Activated CD8-positive, alpha-beta memory T cell treated with anti-CD3 and anti-CD28 coated beads, Interleukin-2, amount 10 ng/mL, durations not matched to agents 7 days and 5 days (primary cell): ENCODE measurements at regions of chr7 and their contacts with region 1.

Region 1: DNA sequence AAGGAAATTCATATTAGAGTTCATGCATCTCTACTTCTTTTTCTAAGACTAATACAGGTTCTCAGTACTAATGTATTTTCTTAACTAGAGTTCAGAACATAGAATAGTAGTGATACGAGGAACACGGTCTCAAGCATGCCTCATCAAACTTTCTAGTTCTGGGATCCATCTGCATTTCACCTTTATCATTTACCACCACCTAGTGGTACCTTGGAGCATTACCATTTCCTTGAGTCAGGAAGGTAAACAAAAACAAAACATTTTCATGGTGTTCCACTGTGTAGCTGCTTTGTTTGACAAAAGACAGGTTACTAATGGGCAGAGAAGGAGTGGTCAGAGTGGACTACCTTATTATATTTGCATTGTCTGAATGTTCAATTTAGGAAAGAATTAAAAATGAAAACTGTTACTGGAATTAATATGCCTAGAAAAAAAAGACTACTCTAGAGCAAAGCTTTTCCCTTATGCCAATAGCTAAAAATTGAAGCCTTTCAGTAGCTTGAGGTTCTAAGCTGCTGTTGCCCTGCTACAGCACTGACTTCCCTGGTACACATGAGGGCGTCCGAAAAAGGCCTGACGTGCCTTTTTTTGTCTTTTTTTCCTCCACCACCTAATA is 44.5 kb downstream of the STARD3NL start:
- DNase-seq: no peak
- ATAC-seq: peak; percentile 32
- H3K4me3 Mint-ChIP-seq: no peak overlapping the region
- H3K27ac Mint-ChIP-seq: peak overlapping the region; percentile 74
- H3K4me1 Mint-ChIP-seq: peaks cover 80% of the 10 kb centered on the region
- H3K27me3 Mint-ChIP-seq: no peaks in the 10 kb centered on the region

Region 2: DNA sequence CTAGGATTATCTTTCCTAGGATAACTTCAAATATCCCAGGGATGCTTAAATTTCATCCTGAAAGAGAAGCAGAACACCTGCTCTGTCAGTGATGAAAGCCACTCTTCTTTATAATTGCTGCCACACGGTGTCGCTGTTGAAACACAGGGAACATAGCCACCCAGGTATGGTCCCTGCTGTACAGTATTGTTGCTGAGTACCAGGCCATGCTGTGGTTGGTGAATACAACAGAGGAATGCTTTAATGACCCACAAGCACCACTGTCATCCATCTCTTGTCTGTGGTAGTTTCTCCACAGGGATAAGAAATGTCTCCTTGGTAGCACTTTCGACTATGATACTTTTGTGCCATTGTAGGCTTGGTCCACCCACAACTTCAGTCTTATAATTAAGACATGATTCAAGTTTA is 115.1 kb before region 1 on chr7:
- CTCF ChIA-PET with region 1: interaction called, 60 read pairs
- DNase-seq: peak; percentile 79
- ATAC-seq: peak; percentile 91
- H3K4me3 Mint-ChIP-seq: no peak overlapping the region
- H3K27ac Mint-ChIP-seq: no peak overlapping the region
- H3K4me1 Mint-ChIP-seq: peaks cover 2% of the 10 kb centered on the region
- H3K27me3 Mint-ChIP-seq: peaks cover 36% of the 10 kb centered on the region

Region 3: GRCh38 chr7:38206071-38206470 is 16.5 kb before region 1 on chr7:
- CTCF ChIA-PET with region 1: no interaction called
- DNase-seq: no peak
- ATAC-seq: no peak
- H3K4me3 Mint-ChIP-seq: no peak overlapping the region
- H3K27ac Mint-ChIP-seq: no peak overlapping the region
- H3K4me1 Mint-ChIP-seq: peaks cover 1% of the 10 kb centered on the region
- H3K27me3 Mint-ChIP-seq: no peaks in the 10 kb centered on the region

Region 4: DNA sequence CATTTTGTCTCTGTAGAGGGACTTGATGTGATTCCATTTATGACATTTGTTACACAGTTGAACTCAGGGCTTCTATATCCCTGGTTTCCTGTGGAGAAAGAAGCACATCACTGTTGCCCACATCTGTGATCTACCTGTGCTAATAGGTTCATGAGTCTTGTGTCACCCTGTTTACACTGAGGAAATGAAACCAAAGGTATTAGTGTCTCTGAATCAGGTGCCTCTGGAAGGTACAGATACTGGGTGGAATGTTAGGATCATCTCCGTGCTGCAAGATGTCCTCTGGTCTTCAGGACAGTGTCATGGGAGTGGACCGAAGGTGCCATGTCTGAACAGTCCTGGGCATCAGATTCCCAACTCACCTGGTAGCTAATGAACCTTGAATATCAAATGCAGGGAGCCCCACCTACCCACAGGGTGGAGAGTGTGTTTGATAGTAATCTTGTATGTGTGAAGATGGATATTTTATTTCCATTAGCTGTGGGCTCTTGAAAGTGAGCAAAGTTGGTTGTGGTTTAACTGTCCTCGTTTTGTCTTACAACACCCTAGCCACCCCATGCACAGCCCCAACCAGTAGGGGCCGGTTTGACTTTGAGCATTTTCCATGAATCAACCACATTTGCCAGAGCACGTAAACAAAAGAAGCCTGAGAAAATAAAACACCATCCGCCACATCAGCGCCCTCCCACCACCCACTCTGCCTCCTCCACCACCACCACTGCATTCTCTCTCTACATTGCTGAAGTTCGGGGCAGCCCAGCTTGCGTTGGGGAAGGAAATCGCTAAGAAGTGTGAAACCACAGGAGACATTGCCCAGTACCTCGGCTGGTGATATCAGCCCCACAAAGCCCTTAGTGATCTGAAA is 10.1 kb after region 1 on chr7:
- CTCF ChIA-PET with region 1: interaction called, 104 read pairs
- DNase-seq: peak; percentile 95
- ATAC-seq: peak; percentile 80
- H3K4me3 Mint-ChIP-seq: peak overlapping the region; percentile 55
- H3K27ac Mint-ChIP-seq: peak overlapping the region; percentile 96
- H3K4me1 Mint-ChIP-seq: peaks cover 91% of the 10 kb centered on the region
- H3K27me3 Mint-ChIP-seq: no peaks in the 10 kb centered on the region

Region 5: DNA sequence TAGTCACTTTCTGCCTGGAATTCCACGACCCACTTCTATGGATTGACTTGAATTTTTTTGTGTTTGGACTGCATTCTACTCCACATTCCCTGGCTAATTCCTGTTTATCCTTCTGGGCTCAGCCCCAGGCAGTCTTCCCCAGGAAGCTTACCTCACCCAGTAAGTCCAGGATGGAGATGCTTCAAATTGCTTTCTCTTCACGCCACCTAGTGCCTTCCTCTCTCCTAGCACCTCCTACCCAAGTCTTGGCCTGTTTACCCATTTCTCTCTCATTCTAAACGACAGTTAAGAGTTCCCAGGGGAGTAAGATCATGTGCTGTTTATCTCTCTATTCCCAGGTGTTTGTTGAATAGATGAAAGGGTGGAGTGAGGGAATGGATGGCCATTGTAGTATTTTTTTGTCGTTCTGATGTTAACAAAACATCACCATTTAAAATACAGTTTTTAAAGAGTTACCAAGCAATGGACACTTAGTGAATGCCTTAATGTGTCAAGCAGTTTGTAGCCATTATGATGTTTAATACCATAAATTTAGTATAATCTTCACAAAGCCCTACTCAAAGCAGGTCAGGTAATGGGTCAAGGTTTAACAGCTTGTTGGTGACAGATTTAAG is 96.3 kb after region 1 on chr7:
- CTCF ChIA-PET with region 1: interaction called, 55 read pairs
- DNase-seq: peak; percentile 58
- ATAC-seq: peak; percentile 52
- H3K4me3 Mint-ChIP-seq: peak overlapping the region; percentile 77
- H3K27ac Mint-ChIP-seq: peak overlapping the region; percentile 97
- H3K4me1 Mint-ChIP-seq: peaks cover 42% of the 10 kb centered on the region
- H3K27me3 Mint-ChIP-seq: no peaks in the 10 kb centered on the region

Region 6: DNA sequence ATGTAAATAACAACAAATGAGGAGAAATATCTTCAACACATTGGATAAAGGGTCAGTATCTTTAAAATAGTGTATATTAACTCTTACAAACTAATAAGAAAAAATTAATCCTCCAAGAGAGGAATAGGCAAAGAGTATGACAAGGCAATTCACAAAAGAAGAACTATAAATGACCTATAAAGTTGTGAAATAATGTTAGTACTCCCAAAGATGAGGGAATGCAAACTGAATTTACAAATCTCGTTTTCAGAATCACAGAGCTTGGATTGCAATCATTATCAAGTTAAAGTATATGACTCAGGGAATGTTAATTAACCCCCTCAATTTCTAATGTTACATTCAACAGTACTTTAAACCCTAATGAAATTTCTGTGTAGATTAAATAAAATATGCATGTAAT is 138.2 kb after region 1 on chr7:
- CTCF ChIA-PET with region 1: interaction called, 314 read pairs
- DNase-seq: no peak
- ATAC-seq: no peak
- H3K4me3 Mint-ChIP-seq: peak overlapping the region; percentile 99
- H3K27ac Mint-ChIP-seq: peak overlapping the region; percentile 95
- H3K4me1 Mint-ChIP-seq: peaks cover 26% of the 10 kb centered on the region
- H3K27me3 Mint-ChIP-seq: no peaks in the 10 kb centered on the region